Activated CD8-positive, alpha-beta T cell treated with anti-CD3 and anti-CD28 coated beads for 36 hours (primary cell): ENCODE measurements at regions of chr5 and their contacts with region 1.

Region 1: GRCh38 chr5:96662725-96663513 is 743 bp downstream of the CAST start:
- DNase-seq: peak; percentile 89
- ATAC-seq: peak; percentile 80
- H3K4me3 Mint-ChIP-seq: peak overlapping the region; percentile 99
- H3K27ac Mint-ChIP-seq: peak overlapping the region; percentile 99
- H3K4me1 Mint-ChIP-seq: peaks cover 44% of the 10 kb centered on the region
- H3K27me3 Mint-ChIP-seq: peaks cover 6% of the 10 kb centered on the region
- CTCF ChIP-seq: no peak

Region 2: DNA sequence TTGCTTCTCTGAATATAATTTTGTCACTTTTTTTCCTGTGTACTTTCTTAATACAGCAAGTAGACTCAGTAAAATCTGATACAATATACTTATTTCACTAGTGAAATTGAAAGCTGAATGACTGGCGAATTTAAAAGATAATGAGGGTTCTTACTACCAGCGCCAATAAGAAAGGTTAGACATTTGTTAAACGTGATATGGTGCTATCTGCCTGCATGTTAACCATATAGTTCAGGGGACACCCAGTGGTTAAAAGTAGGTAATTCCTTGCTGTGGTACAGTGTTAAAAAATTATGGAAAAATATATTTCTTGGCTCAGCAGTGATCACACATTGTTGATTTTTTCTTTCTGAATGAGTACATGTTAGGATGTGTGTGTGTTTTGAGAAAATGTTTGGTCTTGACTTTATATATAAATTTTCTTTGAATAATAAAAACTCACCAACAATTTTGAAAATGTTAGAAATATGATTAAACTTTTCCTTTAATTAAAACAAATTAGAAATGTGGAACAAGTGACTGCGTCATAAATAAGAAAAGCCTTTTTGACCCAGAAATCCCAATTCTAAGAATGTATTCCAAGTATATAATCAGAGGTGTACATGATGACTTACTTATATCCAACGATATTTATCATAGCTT is 25.0 kb after region 1 on chr5:
- CTCF ChIA-PET with region 1: interaction called, 11 read pairs
- POLR2A ChIA-PET with region 1: interaction called, 4 read pairs
- intact Hi-C with region 1: no loop called
- DNase-seq: no peak
- ATAC-seq: peak; percentile 90
- H3K4me3 Mint-ChIP-seq: no peak overlapping the region
- H3K27ac Mint-ChIP-seq: no peak overlapping the region
- H3K4me1 Mint-ChIP-seq: peaks cover 19% of the 10 kb centered on the region
- H3K27me3 Mint-ChIP-seq: no peaks in the 10 kb centered on the region
- CTCF ChIP-seq: peak; percentile 66

Region 3: DNA sequence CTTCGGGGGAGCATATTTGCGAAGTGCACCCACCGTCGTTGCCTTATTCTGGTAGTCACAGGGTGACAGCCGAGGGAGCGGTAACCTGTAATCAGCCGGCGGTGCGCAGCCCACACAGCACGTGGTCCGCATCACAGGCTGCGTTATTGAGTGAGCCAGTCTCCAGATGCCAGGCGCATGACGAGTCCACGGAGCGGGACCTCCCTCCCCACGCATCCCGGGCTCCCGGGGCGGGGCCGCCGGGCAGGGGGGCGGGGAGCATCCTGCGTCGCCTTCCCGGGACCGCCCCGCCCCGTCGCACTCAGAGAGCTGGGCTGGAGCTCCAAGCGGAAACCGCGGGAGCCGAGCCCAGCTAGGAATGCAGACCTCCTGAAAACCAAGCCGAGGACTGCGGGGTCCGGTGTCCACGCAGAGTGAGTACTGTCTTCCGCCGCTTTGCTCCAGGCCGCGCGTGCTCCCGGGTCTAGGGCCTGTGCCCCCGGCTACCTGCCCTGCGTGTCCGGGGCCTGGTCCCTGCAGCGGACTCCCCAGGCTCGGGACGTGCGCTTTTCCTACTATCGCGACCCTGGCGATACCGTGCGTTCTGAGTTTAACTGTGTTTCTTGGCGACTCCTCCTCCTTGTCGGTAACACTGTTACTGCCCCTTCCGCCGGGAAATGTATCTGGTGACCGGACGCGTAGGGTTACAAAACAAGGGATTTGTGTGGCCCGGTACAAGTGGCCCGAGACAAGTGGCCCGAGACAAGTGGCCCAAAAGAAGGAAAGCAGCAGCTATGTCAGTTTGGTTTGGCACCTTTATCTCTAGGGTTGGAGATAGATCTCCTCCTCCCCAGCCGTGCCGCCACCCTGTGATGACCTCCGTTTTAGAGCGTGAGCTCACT is 39.8 kb after region 1 on chr5:
- CTCF ChIA-PET with region 1: no interaction called
- POLR2A ChIA-PET with region 1: interaction called, 15 read pairs
- intact Hi-C with region 1: loop called (anchors 5 kb)
- DNase-seq: peak; percentile 91
- ATAC-seq: peak; percentile 86
- H3K4me3 Mint-ChIP-seq: peak overlapping the region; percentile 92
- H3K27ac Mint-ChIP-seq: peak overlapping the region; percentile 96
- H3K4me1 Mint-ChIP-seq: peaks cover 50% of the 10 kb centered on the region
- H3K27me3 Mint-ChIP-seq: no peaks in the 10 kb centered on the region
- CTCF ChIP-seq: no peak

Region 4: DNA sequence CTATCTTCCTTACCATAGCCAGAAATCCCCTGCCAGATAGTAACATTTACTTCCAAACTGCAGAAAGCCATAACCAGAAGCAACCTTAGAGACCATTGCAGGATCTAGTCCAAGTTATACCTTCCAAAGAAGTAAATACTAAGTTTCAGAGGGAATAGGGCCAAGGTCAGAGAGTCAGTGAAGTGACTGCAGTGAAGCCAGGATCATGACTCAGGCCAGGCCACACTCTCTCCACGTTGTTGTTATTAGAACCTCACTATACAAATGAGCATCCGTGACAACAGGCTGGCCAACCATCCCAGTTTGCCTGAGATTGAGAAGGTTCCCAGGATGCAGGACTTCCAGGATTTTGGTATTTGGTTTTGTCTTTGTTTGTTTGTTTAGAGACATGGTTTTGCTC is 133.5 kb after region 1 on chr5:
- CTCF ChIA-PET with region 1: no interaction called
- POLR2A ChIA-PET with region 1: no interaction called
- intact Hi-C with region 1: no loop called
- DNase-seq: no peak
- ATAC-seq: no peak
- H3K4me3 Mint-ChIP-seq: no peak overlapping the region
- H3K27ac Mint-ChIP-seq: peak overlapping the region; percentile 3
- H3K4me1 Mint-ChIP-seq: peaks cover 48% of the 10 kb centered on the region
- H3K27me3 Mint-ChIP-seq: no peaks in the 10 kb centered on the region
- CTCF ChIP-seq: no peak

Region 5: GRCh38 chr5:97183100-97183929 is 520.4 kb after region 1 on chr5 and contains the start of gene RIOK2:
- CTCF ChIA-PET with region 1: no interaction called
- POLR2A ChIA-PET with region 1: no interaction called
- intact Hi-C with region 1: loop called (anchors 5 kb)
- DNase-seq: peak; percentile 97
- ATAC-seq: peak; percentile 93
- H3K4me3 Mint-ChIP-seq: peak within 1 kb of the TSS; percentile 91
- H3K27ac Mint-ChIP-seq: peak within 1 kb of the TSS; percentile 100
- H3K4me1 Mint-ChIP-seq: peaks cover 32% of the 10 kb centered on the region
- H3K27me3 Mint-ChIP-seq: no peaks in the 10 kb centered on the region
- CTCF ChIP-seq: no peak
- total RNA-seq, gene RIOK2: 31.7 to 33.1 TPM